CD4-positive, alpha-beta memory T cell (primary cell): ENCODE measurements at regions of chr15 and their contacts with region 1.

Region 1: DNA sequence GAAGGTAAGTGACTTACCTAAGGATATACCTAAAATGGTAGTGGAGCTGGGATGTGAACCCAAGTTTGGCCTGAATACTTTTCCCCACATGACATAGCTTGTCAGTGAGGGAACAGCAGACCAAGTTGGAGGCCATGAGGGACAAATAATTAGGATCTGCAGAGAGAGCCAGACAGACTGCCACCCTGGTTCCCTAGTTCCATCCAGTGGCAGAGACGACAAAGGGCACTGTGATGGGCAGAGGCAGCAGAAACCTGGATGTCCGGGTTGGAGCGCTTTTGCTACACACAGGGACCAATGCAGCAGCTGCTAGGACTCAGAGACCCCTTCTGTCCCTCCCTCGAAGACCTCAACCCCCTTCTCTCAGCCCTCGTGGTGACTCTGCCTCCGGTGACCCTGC is 1.2 kb downstream of the CPLX3 start:
- DNase-seq: no peak
- H3K4me3 ChIP-seq: no peak overlapping the region
- H3K4me3 Mint-ChIP-seq: no peak overlapping the region
- H3K27ac ChIP-seq: no peak overlapping the region
- H3K27ac Mint-ChIP-seq: no peak overlapping the region
- H3K4me1 ChIP-seq: no peaks in the 10 kb centered on the region
- H3K4me1 Mint-ChIP-seq: peaks cover 0 to 9% (median 3%) of the 10 kb centered on the region in 4 donors
- H3K27me3 ChIP-seq: peaks cover 11% of the 10 kb centered on the region
- H3K27me3 Mint-ChIP-seq: peaks cover 7 to 11% of the 10 kb centered on the region in 2 donors

Region 2: GRCh38 chr15:74857082-74857655 is 29.5 kb after region 1 on chr15:
- CTCF ChIA-PET with region 1: no interaction called
- POLR2A ChIA-PET with region 1: no interaction called
- intact Hi-C with region 1: no loop called
- DNase-seq: no peak
- H3K4me3 ChIP-seq: no peak overlapping the region
- H3K4me3 Mint-ChIP-seq: peak overlapping the region in 1 of 8 donors; percentile 17
- H3K27ac ChIP-seq: peak overlapping the region; percentile 11
- H3K27ac Mint-ChIP-seq: peak overlapping the region; percentile 74 to 94 (median 80)
- H3K4me1 ChIP-seq: peaks cover 32% of the 10 kb centered on the region
- H3K4me1 Mint-ChIP-seq: peaks cover 18 to 47% (median 30%) of the 10 kb centered on the region in 4 donors
- H3K27me3 ChIP-seq: no peaks in the 10 kb centered on the region
- H3K27me3 Mint-ChIP-seq: no peaks in the 10 kb centered on the region

Region 3: DNA sequence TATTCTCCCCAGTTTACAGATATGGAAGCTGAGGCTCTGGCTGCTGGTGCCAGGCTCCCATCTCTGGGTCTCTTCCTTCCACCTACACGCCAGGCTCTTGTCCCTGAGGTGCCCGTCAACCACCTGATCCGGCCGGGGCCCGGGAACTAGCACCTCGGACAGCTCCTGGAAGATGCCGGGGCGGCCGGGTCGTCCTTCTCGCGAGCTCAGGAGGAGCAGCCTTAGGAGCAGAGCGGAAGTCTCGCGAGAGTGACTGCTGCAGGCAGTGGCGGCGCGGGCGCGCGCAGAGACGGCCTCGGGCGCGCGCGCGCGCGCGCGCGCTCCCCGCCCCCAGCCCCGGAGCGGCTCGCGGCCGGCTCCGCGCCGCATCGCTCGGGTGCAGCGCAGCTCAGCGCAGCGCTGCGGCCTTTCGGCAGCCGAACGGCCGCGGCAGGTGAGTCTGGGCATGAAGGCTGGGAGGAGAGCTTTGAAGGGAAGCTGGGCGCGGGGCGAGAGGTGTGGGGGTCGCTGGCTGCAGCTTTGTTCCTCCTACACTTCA is 167.7 kb after region 1 on chr15 and contains the start of gene SCAMP5:
- CTCF ChIA-PET with region 1: no interaction called
- POLR2A ChIA-PET with region 1: no interaction called
- intact Hi-C with region 1: loop called (anchors 1 kb)
- DNase-seq: peak; percentile 90 to 93 (median 90)
- H3K4me3 ChIP-seq: peak within 1 kb of the TSS; percentile 47 to 74
- H3K4me3 Mint-ChIP-seq: peak within 1 kb of the TSS; percentile 76 to 92 (median 84)
- H3K27ac ChIP-seq: no peak within 1 kb of the TSS
- H3K27ac Mint-ChIP-seq: peak within 1 kb of the TSS in 4 of 7 donors; percentile 29 to 86 (median 74)
- H3K4me1 ChIP-seq: peaks cover 17% of the 10 kb centered on the region
- H3K4me1 Mint-ChIP-seq: peaks cover 9 to 16% (median 14%) of the 10 kb centered on the region in 4 donors
- H3K27me3 ChIP-seq: peaks cover 8% of the 10 kb centered on the region
- H3K27me3 Mint-ChIP-seq: peaks cover 16 to 28% of the 10 kb centered on the region in 2 donors
- total RNA-seq, gene SCAMP5: 0.26 to 0.33 TPM

Region 4: GRCh38 chr15:75916978-75917377 is 1089.3 kb after region 1 on chr15:
- CTCF ChIA-PET with region 1: no interaction called
- POLR2A ChIA-PET with region 1: no interaction called
- intact Hi-C with region 1: no loop called
- DNase-seq: no peak
- H3K4me3 ChIP-seq: no peak overlapping the region
- H3K4me3 Mint-ChIP-seq: no peak overlapping the region
- H3K27ac ChIP-seq: no peak overlapping the region
- H3K27ac Mint-ChIP-seq: no peak overlapping the region
- H3K4me1 ChIP-seq: no peaks in the 10 kb centered on the region
- H3K4me1 Mint-ChIP-seq: peaks cover 4 to 10% (median 7%) of the 10 kb centered on the region in 4 donors
- H3K27me3 ChIP-seq: no peaks in the 10 kb centered on the region
- H3K27me3 Mint-ChIP-seq: no peaks in the 10 kb centered on the region